ENCODE measurements at regions of chr2 and their contacts with region 1.

Region 1: DNA sequence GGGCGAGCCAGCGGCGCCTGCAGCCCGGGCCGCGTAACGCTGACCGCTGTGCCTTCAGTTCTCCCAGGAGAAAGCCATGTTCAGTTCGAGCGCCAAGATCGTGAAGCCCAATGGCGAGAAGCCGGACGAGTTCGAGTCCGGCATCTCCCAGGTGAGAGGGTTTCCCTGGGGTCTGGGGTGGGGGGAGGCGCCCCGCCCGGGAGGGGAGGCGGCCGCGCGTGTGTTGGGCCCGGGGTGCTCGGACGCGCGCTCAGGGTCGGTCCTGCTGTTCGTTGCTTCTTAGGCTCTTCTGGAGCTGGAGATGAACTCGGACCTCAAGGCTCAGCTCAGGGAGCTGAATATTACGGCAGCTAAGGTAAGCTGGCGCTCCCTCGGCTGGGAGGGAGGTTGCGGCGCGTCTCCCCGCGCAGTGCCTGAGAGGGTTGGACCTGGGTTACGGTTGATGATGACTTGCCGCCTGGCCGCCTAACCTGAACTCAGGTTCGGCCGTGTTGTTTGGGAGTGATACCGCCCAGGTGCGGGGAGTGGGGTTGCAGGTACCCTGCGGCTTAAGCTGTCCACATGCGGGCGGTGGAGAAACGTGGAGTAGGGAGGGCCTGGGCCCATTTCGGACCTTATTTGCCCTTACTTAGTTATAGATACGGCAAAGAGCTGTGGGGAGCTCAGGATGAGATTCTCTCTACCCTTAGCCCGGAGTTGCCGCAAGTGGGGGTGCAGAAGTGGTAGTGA is 638 bp downstream of the RPS7 start:
- DNase-seq: peak; percentile 27
- H3K4me3 ChIP-seq: peak overlapping the region; percentile 37 to 82 (median 73)
- H3K27ac ChIP-seq: peak overlapping the region; percentile 54
- H3K4me1 ChIP-seq: peaks cover 31% of the 10 kb centered on the region
- H3K27me3 ChIP-seq: no peaks in the 10 kb centered on the region
- CTCF ChIP-seq: no peak
- POLR2A ChIP-seq: no peak

Region 2: DNA sequence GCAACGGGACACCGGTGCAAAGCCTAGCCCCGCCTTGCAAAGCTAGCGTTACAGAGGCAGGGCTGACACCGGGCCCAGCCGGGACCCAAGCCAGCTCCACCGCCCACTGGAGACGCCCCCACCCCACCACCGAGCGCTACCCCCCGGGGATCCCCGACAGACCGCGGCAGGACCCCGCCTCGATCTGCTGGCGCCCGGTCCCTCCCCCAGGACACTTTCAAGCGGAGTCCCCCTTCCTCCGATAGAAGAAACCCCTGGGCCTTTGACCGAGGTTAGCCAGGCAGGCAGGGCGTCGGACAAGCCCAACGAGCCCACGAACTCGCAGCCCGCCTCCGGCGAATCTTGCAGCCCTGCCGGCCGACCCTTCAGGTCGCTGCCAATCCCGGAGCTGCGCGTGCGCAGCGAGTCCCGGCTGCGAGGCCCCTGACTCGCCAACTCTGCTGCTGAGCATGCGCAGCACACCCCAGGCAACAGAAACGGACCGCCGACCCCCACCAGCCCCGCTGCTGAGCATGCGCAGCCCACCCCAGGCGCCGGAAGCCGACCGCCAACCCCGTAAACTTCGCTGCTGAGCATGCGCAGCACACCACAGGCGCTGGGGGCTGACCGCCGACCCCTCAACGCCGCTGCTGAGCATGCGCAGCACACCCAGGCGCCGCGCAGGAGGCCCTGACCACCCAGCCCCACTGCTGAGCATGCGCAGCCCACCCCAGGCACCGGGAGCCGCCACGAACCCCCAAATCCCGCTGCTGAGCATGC is 57.0 kb before region 1 on chr2:
- CTCF ChIA-PET with region 1: no interaction called
- POLR2A ChIA-PET with region 1: interaction called, 3 read pairs
- dilution Hi-C with region 1: no loop called
- intact Hi-C with region 1: loop called (anchors 1 kb)
- DNase-seq: peak; percentile 100
- H3K4me3 ChIP-seq: peak overlapping the region; percentile 66 to 89 (median 89)
- H3K27ac ChIP-seq: peak overlapping the region; percentile 60
- H3K4me1 ChIP-seq: peaks cover 24% of the 10 kb centered on the region
- H3K27me3 ChIP-seq: no peaks in the 10 kb centered on the region
- CTCF ChIP-seq: no peak
- POLR2A ChIP-seq: peak; percentile 83

Region 3: GRCh38 chr2:3558205-3559014 is 17.3 kb before region 1 on chr2 and contains the start of gene RNASEH1:
- CTCF ChIA-PET with region 1: interaction called, 3 read pairs
- POLR2A ChIA-PET with region 1: interaction called, 4 read pairs
- dilution Hi-C with region 1: no loop called
- intact Hi-C with region 1: loop called (anchors 1 kb)
- DNase-seq: peak; percentile 99
- H3K4me3 ChIP-seq: peak within 1 kb of the TSS; percentile 65 to 96 (median 90)
- H3K27ac ChIP-seq: peak within 1 kb of the TSS; percentile 80
- H3K4me1 ChIP-seq: peaks cover 15% of the 10 kb centered on the region
- H3K27me3 ChIP-seq: no peaks in the 10 kb centered on the region
- CTCF ChIP-seq: no peak
- POLR2A ChIP-seq: peak; percentile 90
- total RNA-seq, gene RNASEH1: 30.8 and 31.4 TPM in 2 replicates

Measured in endothelial cell of umbilical vein (primary cell).